HepG2 (cell line): ENCODE measurements at regions of chr7 and their contacts with region 1.

Region 1: DNA sequence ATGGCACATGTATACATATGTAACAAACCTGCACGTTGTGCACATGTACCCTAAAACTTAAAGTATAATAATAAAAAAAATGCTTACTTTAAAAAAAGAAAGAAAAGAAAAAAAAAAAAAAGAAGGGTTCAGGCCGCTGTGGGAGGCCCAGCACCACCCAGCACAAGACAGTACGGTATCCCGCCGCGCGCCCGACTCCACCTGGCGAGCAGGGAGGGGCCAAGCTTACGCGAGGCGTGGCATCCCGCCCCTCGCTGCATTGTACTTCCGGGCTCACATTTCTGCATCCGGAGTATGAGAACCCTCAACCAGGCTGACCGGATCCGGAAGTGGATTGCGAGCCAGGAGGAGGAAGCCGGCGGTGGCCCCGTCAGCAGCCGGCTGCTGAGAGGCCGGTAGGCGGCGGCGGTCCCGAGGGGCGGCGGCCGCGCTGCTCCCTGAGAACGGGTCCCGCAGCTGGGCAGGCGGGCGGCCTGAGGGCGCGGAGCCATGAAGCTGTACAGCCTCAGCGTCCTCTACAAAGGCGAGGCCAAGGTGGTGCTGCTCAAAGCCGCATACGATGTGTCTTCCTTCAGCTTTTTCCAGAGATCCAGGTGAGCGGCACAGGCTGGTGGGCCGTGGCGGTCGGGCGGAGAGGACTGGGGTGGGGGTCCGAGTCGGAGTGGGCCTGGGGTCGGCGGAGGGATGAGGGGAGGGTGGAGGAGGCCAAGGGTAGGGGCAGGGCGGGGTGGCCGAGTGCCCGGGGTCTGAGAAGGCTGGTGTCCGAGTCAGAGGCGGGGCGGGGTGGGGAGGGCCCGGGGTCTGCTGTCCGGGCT is at the start of gene YKT6:
- DNase-seq: peak; percentile 95
- ATAC-seq: peak; percentile 99
- H3K4me3 ChIP-seq: peak within 1 kb of the TSS; percentile 87 to 100 (median 98)
- H3K27ac ChIP-seq: peak within 1 kb of the TSS; percentile 63
- H3K4me1 ChIP-seq: peaks cover 9% of the 10 kb centered on the region
- H3K27me3 ChIP-seq: no peaks in the 10 kb centered on the region; a peak in 2 of 5 replicates
- CTCF ChIP-seq: peak; percentile 62
- EP300 ChIP-seq: no peak
- POLR2A ChIP-seq: peak; percentile 65 to 79
- RAD21 ChIP-seq: peak; percentile 48; the same call in 1 of the 2 replicates
- total RNA-seq, gene YKT6: 52.2 and 59.0 TPM in 2 replicates

Region 2: GRCh38 chr7:44072364-44073231 is 128.3 kb before region 1 on chr7:
- CTCF ChIA-PET with region 1: interaction called, 5 read pairs
- POLR2A ChIA-PET with region 1: interaction called, 4 read pairs
- in situ Hi-C with region 1: no loop called
- intact Hi-C with region 1: loop called (anchors 1 kb)
- DNase-seq: peak; percentile 76
- ATAC-seq: peak; percentile 81
- H3K4me3 ChIP-seq: peak overlapping the region in 1 of 3 experiments; percentile 46; a peak in 1 of 6 replicates
- H3K27ac ChIP-seq: peak overlapping the region; percentile 54
- H3K4me1 ChIP-seq: peaks cover 34% of the 10 kb centered on the region
- H3K27me3 ChIP-seq: no peaks in the 10 kb centered on the region
- CTCF ChIP-seq: peak; percentile 62
- EP300 ChIP-seq: no peak
- POLR2A ChIP-seq: no peak
- RAD21 ChIP-seq: peak; percentile 66

Region 3: DNA sequence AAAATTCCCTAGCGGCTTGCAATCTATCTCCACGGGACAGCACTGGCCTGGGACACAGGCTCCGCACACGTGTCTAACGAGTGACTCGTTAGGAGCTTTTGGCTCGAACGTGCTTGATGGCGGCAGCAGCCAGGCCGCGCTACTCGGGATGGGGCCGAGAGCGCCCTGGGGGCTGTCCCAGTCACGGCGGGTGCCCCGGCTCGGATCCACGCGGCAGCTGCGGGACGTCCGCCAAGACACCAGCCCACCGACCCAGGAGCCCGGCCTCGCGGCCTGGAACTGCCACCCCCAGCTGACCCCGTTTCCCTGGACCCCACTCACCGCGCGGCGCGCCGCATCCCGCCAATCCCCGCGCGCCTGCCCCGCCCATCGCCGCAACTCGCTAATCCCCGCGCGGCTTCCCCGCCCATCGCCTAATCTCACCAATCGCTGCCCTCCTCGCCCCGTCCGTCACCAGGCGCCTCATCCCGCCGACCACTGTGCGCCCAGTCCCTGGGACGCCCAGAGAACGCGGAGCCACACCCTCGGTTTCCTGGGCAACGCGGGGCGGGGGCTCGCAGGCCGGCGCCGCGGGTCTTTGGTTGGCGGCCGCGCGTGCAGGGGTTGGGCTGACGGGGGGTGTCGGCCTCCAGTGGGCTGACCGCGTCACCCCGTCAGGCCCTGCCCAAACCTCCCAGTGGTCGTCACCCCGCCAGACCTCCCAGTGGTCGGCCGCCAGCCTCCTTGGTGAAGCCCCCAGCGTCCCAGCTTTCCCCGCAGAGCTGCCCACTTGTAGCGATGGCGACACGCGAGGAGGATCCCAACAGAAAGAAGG is 77.5 kb before region 1 on chr7 and contains the start of gene POLD2:
- CTCF ChIA-PET with region 1: no interaction called
- POLR2A ChIA-PET with region 1: no interaction called
- in situ Hi-C with region 1: loop called (anchors 5 kb)
- intact Hi-C with region 1: no loop called
- DNase-seq: peak; percentile 90
- ATAC-seq: peak; percentile 99
- H3K4me3 ChIP-seq: peak within 1 kb of the TSS; percentile 78 to 86 (median 83)
- H3K27ac ChIP-seq: peak within 1 kb of the TSS; percentile 53
- H3K4me1 ChIP-seq: peaks cover 24% of the 10 kb centered on the region
- H3K27me3 ChIP-seq: no peaks in the 10 kb centered on the region; a peak in 1 of 5 replicates
- CTCF ChIP-seq: 0 out of 2 replicates have a peak, but pooled peaks have one; percentile 4
- EP300 ChIP-seq: no peak
- POLR2A ChIP-seq: peak; percentile 69 to 77
- RAD21 ChIP-seq: peak; percentile 47
- total RNA-seq, gene POLD2: 87.6 and 98.8 TPM in 2 replicates

Region 4: GRCh38 chr7:44131173-44132029 is 69.5 kb before region 1 on chr7:
- CTCF ChIA-PET with region 1: interaction called, 6 read pairs
- POLR2A ChIA-PET with region 1: interaction called, 7 read pairs
- in situ Hi-C with region 1: no loop called
- intact Hi-C with region 1: loop called (anchors 10 kb)
- DNase-seq: peak; percentile 96
- ATAC-seq: peak; percentile 98
- H3K4me3 ChIP-seq: peak overlapping the region in 1 of 3 experiments; percentile 23; a peak in 2 of 6 replicates
- H3K27ac ChIP-seq: no peak overlapping the region
- H3K4me1 ChIP-seq: peaks cover 35% of the 10 kb centered on the region
- H3K27me3 ChIP-seq: peaks cover 0 to 2% of the 10 kb centered on the region in 2 experiments; a peak in 1 of 5 replicates
- CTCF ChIP-seq: peak; percentile 95
- EP300 ChIP-seq: peak in 1 of 2 experiments; percentile 21; a peak in 1 of 4 replicates
- POLR2A ChIP-seq: no peak
- RAD21 ChIP-seq: peak; percentile 93

Region 5: GRCh38 chr7:44163591-44163990 is 37.3 kb before region 1 on chr7:
- CTCF ChIA-PET with region 1: no interaction called
- POLR2A ChIA-PET with region 1: no interaction called
- in situ Hi-C with region 1: no loop called
- intact Hi-C with region 1: no loop called
- DNase-seq: no peak
- ATAC-seq: no peak
- H3K4me3 ChIP-seq: no peak overlapping the region
- H3K27ac ChIP-seq: no peak overlapping the region
- H3K4me1 ChIP-seq: no peaks in the 10 kb centered on the region
- H3K27me3 ChIP-seq: no peaks in the 10 kb centered on the region; a peak in 1 of 5 replicates
- CTCF ChIP-seq: no peak
- EP300 ChIP-seq: no peak
- POLR2A ChIP-seq: no peak
- RAD21 ChIP-seq: no peak

Region 6: GRCh38 chr7:44231088-44231487 is 30.2 kb after region 1 on chr7:
- CTCF ChIA-PET with region 1: no interaction called
- POLR2A ChIA-PET with region 1: no interaction called
- in situ Hi-C with region 1: no loop called
- intact Hi-C with region 1: loop called (anchors 1 kb)
- DNase-seq: peak; percentile 20
- ATAC-seq: peak; percentile 83
- H3K4me3 ChIP-seq: no peak overlapping the region
- H3K27ac ChIP-seq: no peak overlapping the region
- H3K4me1 ChIP-seq: peaks cover 8% of the 10 kb centered on the region; the same call in 1 of the 2 replicates
- H3K27me3 ChIP-seq: peaks cover 12 to 74% of the 10 kb centered on the region in 2 experiments; a peak in 4 of 5 replicates
- CTCF ChIP-seq: peak; percentile 62
- EP300 ChIP-seq: no peak
- POLR2A ChIP-seq: no peak
- RAD21 ChIP-seq: peak; percentile 41; the same call in 1 of the 2 replicates